H1 (cell line): ENCODE measurements at regions of chr15 and their contacts with region 1.

Region 1: GRCh38 chr15:74179341-74179841 is 5.9 kb downstream of the ISLR start:
- DNase-seq: no peak
- H3K4me3 ChIP-seq: no peak overlapping the region
- H3K27ac ChIP-seq: no peak overlapping the region
- H3K4me1 ChIP-seq: peaks cover 0 to 6% (median 1%) of the 10 kb centered on the region in 4 experiments; a peak in 3 of 7 replicates
- H3K27me3 ChIP-seq: no peaks in the 10 kb centered on the region; a peak in 2 of 7 replicates
- CTCF ChIP-seq: no peak
- EP300 ChIP-seq: no peak
- POLR2A ChIP-seq: no peak
- RAD21 ChIP-seq: no peak

Region 2: GRCh38 chr15:74156678-74157411 is 22.5 kb before region 1 on chr15:
- CTCF ChIA-PET with region 1: interaction called, 11 read pairs
- POLR2A ChIA-PET with region 1: interaction called, 3 read pairs
- DNase-seq: no peak
- H3K4me3 ChIP-seq: no peak overlapping the region
- H3K27ac ChIP-seq: no peak overlapping the region
- H3K4me1 ChIP-seq: peaks cover 0 to 2% (median 0%) of the 10 kb centered on the region in 4 experiments; a peak in 1 of 7 replicates
- H3K27me3 ChIP-seq: no peaks in the 10 kb centered on the region; a peak in 1 of 7 replicates
- CTCF ChIP-seq: no peak
- EP300 ChIP-seq: no peak
- POLR2A ChIP-seq: no peak
- RAD21 ChIP-seq: no peak

Region 3: GRCh38 chr15:74196179-74196590 is 16.8 kb after region 1 on chr15:
- CTCF ChIA-PET with region 1: interaction called, 10 read pairs
- POLR2A ChIA-PET with region 1: interaction called, 76 read pairs
- DNase-seq: no peak
- H3K4me3 ChIP-seq: no peak overlapping the region
- H3K27ac ChIP-seq: no peak overlapping the region
- H3K4me1 ChIP-seq: peaks cover 0 to 12% (median 6%) of the 10 kb centered on the region in 4 experiments; a peak in 6 of 7 replicates
- H3K27me3 ChIP-seq: no peaks in the 10 kb centered on the region
- CTCF ChIP-seq: no peak
- EP300 ChIP-seq: no peak
- POLR2A ChIP-seq: no peak
- RAD21 ChIP-seq: no peak